PC-9 (cell line): ENCODE measurements at regions of chr4 and their contacts with region 1.

Region 1: GRCh38 chr4:24488399-24489164 is 95.8 kb downstream of the DHX15 start:
- DNase-seq: peak in 1 of 2 experiments; percentile 61
- H3K4me3 ChIP-seq: no peak overlapping the region
- H3K27ac ChIP-seq: no peak overlapping the region
- H3K4me1 ChIP-seq: no peaks in the 10 kb centered on the region
- H3K27me3 ChIP-seq: no peaks in the 10 kb centered on the region
- CTCF ChIP-seq: peak; percentile 82

Region 2: GRCh38 chr4:24413291-24413784 is 75.2 kb before region 1 on chr4:
- CTCF ChIA-PET with region 1: no interaction called
- POLR2A ChIA-PET with region 1: no interaction called
- intact Hi-C with region 1: no loop called
- DNase-seq: no peak
- H3K4me3 ChIP-seq: no peak overlapping the region
- H3K27ac ChIP-seq: no peak overlapping the region
- H3K4me1 ChIP-seq: no peaks in the 10 kb centered on the region
- H3K27me3 ChIP-seq: peaks cover 21% of the 10 kb centered on the region; the same call in 1 of the 2 replicates
- CTCF ChIP-seq: no peak

Region 3: GRCh38 chr4:24686871-24687680 is 198.5 kb after region 1 on chr4:
- CTCF ChIA-PET with region 1: no interaction called
- POLR2A ChIA-PET with region 1: no interaction called
- intact Hi-C with region 1: loop called (anchors 10 kb)
- DNase-seq: peak; percentile 44
- H3K4me3 ChIP-seq: no peak overlapping the region
- H3K27ac ChIP-seq: no peak overlapping the region
- H3K4me1 ChIP-seq: no peaks in the 10 kb centered on the region; the same call in 1 of the 2 replicates
- H3K27me3 ChIP-seq: no peaks in the 10 kb centered on the region
- CTCF ChIP-seq: peak; percentile 64

Region 4: GRCh38 chr4:24988776-24989175 is 500.2 kb after region 1 on chr4:
- CTCF ChIA-PET with region 1: no interaction called
- POLR2A ChIA-PET with region 1: no interaction called
- intact Hi-C with region 1: loop called (anchors 5 kb)
- DNase-seq: peak in 1 of 2 experiments; percentile 11
- H3K4me3 ChIP-seq: no peak overlapping the region
- H3K27ac ChIP-seq: no peak overlapping the region
- H3K4me1 ChIP-seq: no peaks in the 10 kb centered on the region
- H3K27me3 ChIP-seq: no peaks in the 10 kb centered on the region
- CTCF ChIP-seq: peak; percentile 64